ENCODE measurements at regions of chr1 and their contacts with region 1.

Region 1: DNA sequence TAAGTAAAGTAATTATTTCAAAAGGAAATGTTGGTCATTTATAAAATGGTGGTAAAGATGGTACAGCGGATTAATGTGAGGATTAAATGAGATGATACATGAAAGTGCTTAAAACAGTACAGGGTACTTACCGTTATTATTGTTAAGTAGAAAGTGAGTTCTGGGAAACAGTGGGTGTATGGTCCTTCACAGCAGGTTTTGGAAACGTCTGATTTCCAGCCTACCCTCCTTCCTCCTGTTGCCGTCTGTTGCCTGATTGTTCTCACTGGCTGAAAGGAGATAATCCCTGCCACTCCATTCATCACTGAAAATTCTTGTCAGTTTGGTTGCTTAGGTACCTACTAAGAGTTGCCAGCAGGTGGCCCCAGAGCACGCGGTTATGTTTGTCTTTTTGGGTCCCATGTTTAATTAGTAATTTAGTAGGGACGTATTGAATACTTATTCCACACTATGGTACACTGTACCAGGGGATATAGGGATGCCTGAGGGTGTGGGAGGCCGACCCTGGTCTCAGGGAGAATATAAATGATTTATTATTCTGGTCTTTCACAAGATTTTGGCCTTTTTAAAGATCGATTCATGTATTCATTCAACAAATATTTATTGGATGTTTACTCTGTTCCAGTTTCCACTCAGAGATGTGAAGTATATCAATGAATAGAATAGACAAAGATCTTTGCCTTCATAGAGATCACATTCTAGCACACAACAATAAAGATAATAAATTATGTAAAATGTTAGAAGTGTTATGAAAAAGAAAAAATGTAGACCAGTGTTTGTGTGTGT is 30.8 kb upstream of the RPTN start:
- DNase-seq: peak; percentile 90
- H3K4me3 Mint-ChIP-seq: peak overlapping the region; percentile 60
- H3K27ac Mint-ChIP-seq: peak overlapping the region; percentile 1
- H3K4me1 Mint-ChIP-seq: peaks cover 41% of the 10 kb centered on the region
- H3K27me3 Mint-ChIP-seq: peaks cover 11% of the 10 kb centered on the region
- CTCF ChIP-seq: peak; percentile 91

Region 2: DNA sequence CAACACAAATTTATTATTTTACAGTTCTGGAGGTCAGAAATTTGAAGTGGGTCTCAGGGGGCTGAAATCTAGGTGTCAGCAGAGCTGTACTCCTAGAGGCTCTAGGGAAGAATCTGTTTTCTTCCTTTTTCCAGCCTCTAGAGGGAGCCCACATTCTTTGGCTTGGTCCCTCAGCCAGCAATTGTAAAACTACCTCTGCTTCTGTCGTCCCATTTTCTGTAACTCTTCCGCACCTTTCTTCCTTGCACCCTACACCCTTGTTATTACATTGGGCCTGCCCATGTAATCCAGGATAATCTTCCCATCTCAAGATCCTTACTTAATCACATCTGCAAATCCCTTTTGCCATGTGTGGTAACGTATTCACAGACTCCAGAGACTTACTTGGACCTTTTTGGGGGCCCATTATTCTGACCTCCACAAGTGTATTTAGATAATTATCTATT is 255.8 kb before region 1 on chr1:
- CTCF ChIA-PET with region 1: interaction called, 14 read pairs
- POLR2A ChIA-PET with region 1: no interaction called
- intact Hi-C with region 1: loop called (anchors 10 kb)
- DNase-seq: peak; percentile 82
- H3K4me3 Mint-ChIP-seq: no peak overlapping the region
- H3K27ac Mint-ChIP-seq: no peak overlapping the region
- H3K4me1 Mint-ChIP-seq: peaks cover 11% of the 10 kb centered on the region
- H3K27me3 Mint-ChIP-seq: no peaks in the 10 kb centered on the region
- CTCF ChIP-seq: peak; percentile 96

Region 3: GRCh38 chr1:152067929-152068328 is 121.9 kb before region 1 on chr1:
- CTCF ChIA-PET with region 1: interaction called, 12 read pairs
- POLR2A ChIA-PET with region 1: no interaction called
- intact Hi-C with region 1: no loop called
- DNase-seq: no peak
- H3K4me3 Mint-ChIP-seq: no peak overlapping the region
- H3K27ac Mint-ChIP-seq: no peak overlapping the region
- H3K4me1 Mint-ChIP-seq: no peaks in the 10 kb centered on the region
- H3K27me3 Mint-ChIP-seq: peaks cover 17% of the 10 kb centered on the region
- CTCF ChIP-seq: no peak

Region 4: GRCh38 chr1:152110860-152111514 is 78.9 kb before region 1 on chr1:
- CTCF ChIA-PET with region 1: interaction called, 78 read pairs
- POLR2A ChIA-PET with region 1: interaction called, 42 read pairs
- intact Hi-C with region 1: no loop called
- DNase-seq: peak; percentile 71
- H3K4me3 Mint-ChIP-seq: no peak overlapping the region
- H3K27ac Mint-ChIP-seq: no peak overlapping the region
- H3K4me1 Mint-ChIP-seq: no peaks in the 10 kb centered on the region
- H3K27me3 Mint-ChIP-seq: no peaks in the 10 kb centered on the region
- CTCF ChIP-seq: no peak

Region 5: DNA sequence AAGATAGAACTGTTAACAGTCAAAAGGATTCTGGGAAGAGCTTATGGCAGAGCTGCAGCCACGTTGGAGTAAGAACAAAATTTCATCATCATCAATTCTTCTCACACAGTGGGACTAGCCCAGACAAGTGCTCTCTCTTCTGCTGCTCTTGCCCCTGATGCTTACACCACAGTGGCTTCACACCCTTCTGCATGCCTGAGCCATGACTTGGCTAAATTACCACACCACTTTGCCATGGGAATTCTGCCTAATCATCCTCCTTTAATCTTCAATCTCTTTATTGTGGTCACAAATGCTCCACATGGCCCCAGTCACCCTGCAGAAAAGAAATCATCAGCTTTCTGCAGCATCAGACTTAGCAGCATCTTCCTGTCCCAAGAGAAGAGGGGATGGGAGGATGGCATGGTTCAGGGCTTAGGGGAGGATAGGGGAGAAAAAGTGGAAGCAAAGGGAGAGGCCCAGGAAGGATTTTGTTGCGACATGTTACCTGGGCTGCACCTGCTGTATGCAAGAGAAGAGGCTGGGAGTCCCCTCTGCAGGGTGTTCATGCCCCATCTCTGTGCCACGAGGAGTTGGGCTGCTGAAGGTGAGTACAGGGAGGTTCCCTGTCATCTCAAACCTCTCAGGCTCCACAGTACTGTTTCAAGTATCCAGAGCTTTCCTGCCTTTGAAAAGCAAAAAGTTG is 21.9 kb before region 1 on chr1:
- CTCF ChIA-PET with region 1: interaction called, 351 read pairs
- POLR2A ChIA-PET with region 1: interaction called, 503 read pairs
- intact Hi-C with region 1: no loop called
- DNase-seq: peak; percentile 100
- H3K4me3 Mint-ChIP-seq: peak overlapping the region; percentile 49
- H3K27ac Mint-ChIP-seq: peak overlapping the region; percentile 99
- H3K4me1 Mint-ChIP-seq: peaks cover 70% of the 10 kb centered on the region
- H3K27me3 Mint-ChIP-seq: no peaks in the 10 kb centered on the region
- CTCF ChIP-seq: no peak

Region 6: DNA sequence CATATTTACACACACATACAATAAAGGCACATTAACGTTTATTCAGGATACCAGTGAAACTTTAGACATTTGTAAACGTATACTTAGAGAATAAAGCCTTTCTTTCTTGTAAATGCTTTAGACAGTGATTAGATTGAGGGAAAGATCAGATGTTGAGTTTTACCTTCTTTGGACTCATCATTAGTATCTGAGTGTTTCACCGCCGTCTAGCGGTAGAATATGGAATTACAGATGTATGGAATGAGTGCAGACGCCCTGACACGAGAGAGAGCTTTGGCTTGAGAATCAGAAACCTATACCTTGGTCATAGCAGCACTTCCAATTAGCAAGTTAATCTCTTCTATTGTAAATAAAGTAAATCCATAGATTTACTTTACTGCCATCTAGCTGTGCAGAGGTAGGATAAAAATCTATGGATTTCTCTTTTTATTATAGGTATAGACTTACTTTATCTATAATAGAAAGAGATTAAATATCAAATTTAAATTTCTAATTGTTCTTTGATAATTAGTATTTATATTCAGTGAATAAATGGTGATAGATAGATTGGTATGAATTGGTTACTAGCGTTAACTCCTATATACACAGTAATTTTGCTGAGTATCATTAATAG is 157.4 kb after region 1 on chr1:
- CTCF ChIA-PET with region 1: interaction called, 31 read pairs
- POLR2A ChIA-PET with region 1: interaction called, 3 read pairs
- intact Hi-C with region 1: loop called (anchors 1 kb)
- DNase-seq: peak; percentile 90
- H3K4me3 Mint-ChIP-seq: no peak overlapping the region
- H3K27ac Mint-ChIP-seq: no peak overlapping the region
- H3K4me1 Mint-ChIP-seq: no peaks in the 10 kb centered on the region
- H3K27me3 Mint-ChIP-seq: peaks cover 43% of the 10 kb centered on the region
- CTCF ChIP-seq: peak; percentile 98

Region 7: GRCh38 chr1:152533327-152533938 is 343.6 kb after region 1 on chr1:
- CTCF ChIA-PET with region 1: interaction called, 5 read pairs
- POLR2A ChIA-PET with region 1: no interaction called
- intact Hi-C with region 1: loop called (anchors 2 kb)
- DNase-seq: peak; percentile 88
- H3K4me3 Mint-ChIP-seq: no peak overlapping the region
- H3K27ac Mint-ChIP-seq: no peak overlapping the region
- H3K4me1 Mint-ChIP-seq: peaks cover 5% of the 10 kb centered on the region
- H3K27me3 Mint-ChIP-seq: no peaks in the 10 kb centered on the region
- CTCF ChIP-seq: peak; percentile 99

Measured in MCF 10A (cell line).